Activated naive CD4-positive, alpha-beta T cell treated with anti-CD3 and anti-CD28 coated beads, Interleukin-2, amount 10 ng/mL, durations not matched to agents 7 days and 5 days (primary cell): ENCODE measurements at regions of chr14 and their contacts with region 1.

Region 1: DNA sequence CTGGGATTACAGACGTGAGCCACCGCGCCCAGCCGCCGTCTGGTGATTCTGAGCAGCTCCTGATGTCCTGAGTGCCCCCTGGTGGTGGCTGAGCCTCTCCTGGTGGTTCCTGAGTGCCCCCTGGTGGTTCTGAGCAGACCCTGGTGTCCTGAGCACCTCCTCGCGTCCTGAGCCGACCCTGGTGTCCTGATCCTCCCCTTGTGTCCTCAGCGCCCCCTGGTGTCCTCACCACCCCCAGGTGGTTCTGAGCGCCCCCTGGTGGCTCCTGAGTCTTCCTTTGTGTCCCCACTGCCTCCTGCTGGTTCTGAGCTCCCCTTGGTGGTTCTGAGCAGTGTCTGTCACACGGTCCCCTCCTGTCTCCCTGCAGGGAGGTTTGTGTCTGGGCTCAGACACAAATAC is 1304.9 kb downstream of the TMEM121 start:
- DNase-seq: peak; percentile 68
- H3K4me3 Mint-ChIP-seq: no peak overlapping the region
- H3K27ac Mint-ChIP-seq: no peak overlapping the region
- H3K4me1 Mint-ChIP-seq: no peaks in the 10 kb centered on the region
- H3K27me3 Mint-ChIP-seq: peaks cover 37% of the 10 kb centered on the region

Region 2: GRCh38 chr14:106776395-106776983 is 54.8 kb before region 1 on chr14:
- CTCF ChIA-PET with region 1: interaction called, 10 read pairs
- DNase-seq: no peak
- H3K4me3 Mint-ChIP-seq: no peak overlapping the region
- H3K27ac Mint-ChIP-seq: no peak overlapping the region
- H3K4me1 Mint-ChIP-seq: peaks cover 11% of the 10 kb centered on the region
- H3K27me3 Mint-ChIP-seq: peaks cover 21% of the 10 kb centered on the region

Region 3: GRCh38 chr14:106790189-106791036 is 40.9 kb before region 1 on chr14:
- CTCF ChIA-PET with region 1: interaction called, 26 read pairs
- DNase-seq: peak; percentile 86
- H3K4me3 Mint-ChIP-seq: no peak overlapping the region
- H3K27ac Mint-ChIP-seq: no peak overlapping the region
- H3K4me1 Mint-ChIP-seq: peaks cover 13% of the 10 kb centered on the region
- H3K27me3 Mint-ChIP-seq: peaks cover 36% of the 10 kb centered on the region

Region 4: DNA sequence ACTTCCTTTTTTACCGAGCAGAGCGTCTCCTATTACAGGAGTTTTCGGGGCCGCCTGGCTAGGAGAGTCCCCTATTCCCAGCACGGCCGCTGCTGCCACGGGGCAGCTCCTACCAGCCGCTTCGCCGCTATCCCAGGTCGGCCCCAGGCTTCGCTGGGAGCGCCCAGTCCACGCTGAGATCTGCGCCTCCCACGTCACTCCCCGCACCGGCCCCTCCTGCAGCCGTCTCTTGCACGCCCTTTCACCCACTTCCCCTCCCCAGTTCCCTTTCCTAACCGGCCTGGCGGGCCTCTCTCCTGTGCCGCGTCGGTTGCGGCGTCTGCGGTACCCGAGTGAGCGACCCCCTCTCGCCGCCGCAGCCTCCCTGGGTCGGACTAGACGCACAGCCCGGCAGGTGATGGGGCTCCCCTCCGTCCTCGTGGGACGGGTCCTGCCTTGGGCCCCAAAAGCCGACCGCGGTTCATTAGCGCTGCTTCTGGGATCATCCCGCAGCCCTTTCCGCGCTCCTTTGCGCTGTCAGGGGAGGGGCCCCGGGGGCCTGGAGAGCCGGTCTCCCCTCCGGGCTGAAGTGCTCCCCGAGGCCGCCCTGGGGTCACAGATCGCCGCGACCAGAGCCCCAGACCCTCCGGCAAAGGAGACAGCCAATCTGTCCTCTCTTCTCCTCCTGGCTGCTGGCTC is 13.4 kb after region 1 on chr14:
- CTCF ChIA-PET with region 1: interaction called, 82 read pairs
- DNase-seq: peak; percentile 80
- H3K4me3 Mint-ChIP-seq: peak overlapping the region; percentile 81
- H3K27ac Mint-ChIP-seq: peak overlapping the region; percentile 73
- H3K4me1 Mint-ChIP-seq: peaks cover 37% of the 10 kb centered on the region
- H3K27me3 Mint-ChIP-seq: peaks cover 19% of the 10 kb centered on the region

Region 5: DNA sequence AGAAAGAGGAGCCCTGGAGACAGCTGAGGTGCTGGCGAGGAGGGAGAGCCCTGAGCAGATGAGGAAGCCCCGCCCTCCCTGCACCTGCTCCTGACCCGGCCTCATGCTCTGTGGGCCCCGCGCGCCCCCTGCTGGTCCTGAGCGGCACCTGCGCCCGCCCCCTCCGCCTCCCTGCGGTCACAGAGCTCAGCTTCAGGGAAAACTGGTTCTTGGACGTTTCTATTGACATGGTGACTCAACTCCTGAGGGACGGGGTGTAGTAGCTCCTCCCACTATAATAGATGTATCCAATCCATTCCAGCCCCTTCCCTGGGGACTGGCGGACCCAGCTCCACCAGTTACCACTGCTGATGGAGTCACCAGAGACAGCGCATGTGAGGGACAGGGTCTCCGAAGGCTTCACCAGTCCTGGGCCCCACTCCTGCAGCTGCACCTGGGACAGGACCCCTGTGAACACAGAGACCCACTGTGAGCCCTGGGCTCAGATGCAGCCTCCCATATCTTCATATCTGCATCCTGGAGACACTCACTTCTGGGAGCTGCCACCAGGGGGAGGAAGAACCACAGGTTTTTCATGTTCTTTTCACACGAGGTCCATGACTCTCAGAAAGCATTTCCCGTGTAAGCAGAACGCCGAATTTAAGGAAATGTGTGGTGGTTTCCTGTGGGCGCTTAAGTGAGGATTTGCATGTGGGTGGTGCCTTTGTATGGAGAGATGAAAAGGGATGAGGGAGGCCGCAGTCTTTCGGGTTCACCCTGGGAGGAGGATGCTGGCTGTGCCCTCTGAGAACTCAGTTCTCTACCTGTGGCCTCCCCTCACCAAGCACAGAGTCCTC is 41.5 kb after region 1 on chr14:
- CTCF ChIA-PET with region 1: interaction called, 44 read pairs
- DNase-seq: peak; percentile 88
- H3K4me3 Mint-ChIP-seq: peak overlapping the region; percentile 31
- H3K27ac Mint-ChIP-seq: no peak overlapping the region
- H3K4me1 Mint-ChIP-seq: peaks cover 23% of the 10 kb centered on the region
- H3K27me3 Mint-ChIP-seq: peaks cover 65% of the 10 kb centered on the region